Left colon (tissue), 2 donors: ENCODE measurements at regions of chr17 and their contacts with region 1.

Region 1: GRCh38 chr17:47229535-47230443 is 20.6 kb downstream of the MYL4 start:
- DNase-seq: peak; percentile 80 to 83
- ATAC-seq: peak; percentile 95

Region 2: GRCh38 chr17:47315451-47316266 is 85.9 kb after region 1 on chr17:
- intact Hi-C with region 1: loop called (anchors 2 to 10 kb)
- DNase-seq: peak in 1 of 2 donors; percentile 26
- ATAC-seq: peak; percentile 81